ENCODE measurements at regions of chr6 and their contacts with region 1.

Region 1: DNA sequence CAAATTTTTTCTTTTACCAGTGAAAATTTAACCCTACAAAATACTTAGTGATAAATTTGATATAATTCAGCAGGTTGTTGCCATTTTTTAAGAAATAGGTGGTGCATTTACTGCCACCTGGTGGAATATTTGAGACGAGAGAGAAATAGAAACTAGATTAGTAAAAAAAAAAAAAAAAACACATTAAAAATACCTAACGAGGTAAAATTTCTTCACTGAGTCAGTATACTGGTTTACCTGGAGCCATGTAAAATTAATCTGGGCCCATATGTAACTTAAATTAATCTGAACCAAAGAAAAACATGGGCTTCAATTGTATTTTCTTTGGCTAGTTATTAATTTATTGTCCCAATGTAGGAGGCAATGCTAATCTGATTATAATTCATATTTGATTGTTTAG is 520.8 kb downstream of the EPM2A start:
- DNase-seq: no peak
- H3K4me3 ChIP-seq: no peak overlapping the region
- H3K27ac ChIP-seq: no peak overlapping the region
- H3K4me1 ChIP-seq: no peaks in the 10 kb centered on the region
- H3K27me3 ChIP-seq: no peaks in the 10 kb centered on the region
- CTCF ChIP-seq: peak in 2 of 3 experiments; percentile 29 to 45

Region 2: GRCh38 chr6:144582939-144583613 is 631.5 kb before region 1 on chr6:
- intact Hi-C with region 1: loop called (anchors 10 kb)
- DNase-seq: no peak
- H3K4me3 ChIP-seq: no peak overlapping the region
- H3K27ac ChIP-seq: no peak overlapping the region
- H3K4me1 ChIP-seq: no peaks in the 10 kb centered on the region
- H3K27me3 ChIP-seq: no peaks in the 10 kb centered on the region
- CTCF ChIP-seq: no peak